ENCODE measurements at regions of chr20 and their contacts with region 1.

Region 1: DNA sequence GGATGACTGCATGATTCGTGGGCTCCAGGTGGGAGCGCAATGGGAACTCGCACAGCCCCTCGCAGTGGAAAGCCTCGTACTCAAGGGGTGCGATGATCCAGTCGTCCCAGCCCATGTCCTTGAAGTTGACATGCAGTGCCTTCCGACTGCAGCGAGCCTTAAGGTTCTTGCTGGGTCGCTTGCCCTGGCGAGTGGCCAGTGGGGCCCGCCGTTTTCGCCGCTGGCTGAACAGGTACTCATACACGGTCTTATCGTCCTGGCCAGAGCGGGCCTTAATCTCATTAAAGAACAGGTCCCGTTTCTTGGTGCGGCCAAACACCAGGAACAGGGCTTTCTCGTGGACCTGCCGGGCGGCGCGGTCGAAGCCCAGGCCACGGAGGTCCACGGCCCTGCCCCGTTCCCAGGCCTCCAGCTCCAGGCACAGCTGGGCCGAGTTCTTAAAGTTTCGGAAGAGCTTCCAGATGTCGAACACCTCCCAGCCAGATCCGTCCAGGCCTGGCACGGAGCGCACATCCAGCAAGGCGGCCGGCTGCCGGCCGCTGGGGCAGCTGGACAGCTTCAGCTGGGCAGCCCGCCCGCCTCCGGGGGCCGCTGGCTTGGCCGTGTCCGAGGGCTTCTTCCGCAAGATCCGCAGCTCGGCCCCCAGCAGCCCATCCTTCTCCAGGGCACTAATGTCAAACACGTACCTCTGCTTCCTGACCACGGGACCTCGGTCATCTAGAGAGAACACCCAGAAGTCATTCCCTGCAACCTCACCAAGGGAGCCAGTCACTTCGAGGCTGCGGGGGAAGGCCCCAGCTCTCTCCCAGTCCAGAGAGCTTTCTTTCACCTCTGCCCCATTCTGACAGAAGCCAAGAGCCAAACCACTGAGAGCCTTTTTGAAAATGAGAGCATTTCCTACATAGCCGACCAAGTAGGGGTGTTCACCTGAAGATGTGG is 3.7 kb downstream of the GDF5 start:
- DNase-seq: no peak
- H3K4me3 ChIP-seq: no peak overlapping the region
- H3K27ac ChIP-seq: no peak overlapping the region
- H3K4me1 ChIP-seq: peaks cover 0 to 21% (median 11%) of the 10 kb centered on the region in 4 donors
- H3K27me3 ChIP-seq: no peaks in the 10 kb centered on the region
- CTCF ChIP-seq: no peak

Region 2: DNA sequence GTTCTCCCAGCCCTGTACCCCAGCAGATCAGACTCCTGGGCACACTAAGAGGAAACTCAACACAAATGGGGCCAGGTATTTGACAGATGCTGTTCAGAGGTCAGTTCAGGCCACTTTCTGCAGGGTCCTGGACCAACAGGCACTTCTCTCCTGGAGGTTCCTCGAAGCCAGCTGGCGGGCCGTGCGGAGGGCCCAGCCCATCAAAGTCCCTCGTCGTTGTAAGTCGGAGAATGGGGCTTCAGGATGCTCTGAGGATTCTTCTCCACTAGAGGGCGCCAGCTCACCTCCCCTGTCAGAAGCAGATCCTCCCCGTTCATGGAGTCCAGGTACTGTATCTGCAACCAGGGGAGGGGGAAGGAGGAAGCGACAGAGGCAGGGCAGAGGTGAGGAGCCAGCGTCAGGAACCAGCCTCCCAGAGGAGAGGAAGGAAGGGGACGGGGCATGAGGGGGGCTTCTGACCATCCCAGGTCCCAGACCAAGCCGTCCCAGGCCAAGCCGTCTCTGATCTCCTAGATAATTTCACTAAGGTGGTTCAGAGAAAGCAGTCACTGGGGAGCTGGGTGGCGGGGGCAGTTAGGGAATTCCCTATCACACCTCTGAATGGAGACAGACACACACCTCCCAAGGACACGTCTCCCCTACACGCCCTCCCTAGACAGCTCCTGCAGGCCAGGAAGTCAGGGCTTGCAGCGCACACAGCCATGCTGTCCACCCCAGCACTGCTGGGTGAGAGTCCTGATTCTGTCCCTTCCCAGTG is 130.4 kb before region 1 on chr20:
- intact Hi-C with region 1: loop called (anchors 5 kb)
- DNase-seq: peak; percentile 76 to 83
- H3K4me3 ChIP-seq: no peak overlapping the region
- H3K27ac ChIP-seq: no peak overlapping the region
- H3K4me1 ChIP-seq: peaks cover 11 to 47% (median 36%) of the 10 kb centered on the region in 4 donors
- H3K27me3 ChIP-seq: no peaks in the 10 kb centered on the region
- CTCF ChIP-seq: peak; percentile 82 to 88

Region 3: DNA sequence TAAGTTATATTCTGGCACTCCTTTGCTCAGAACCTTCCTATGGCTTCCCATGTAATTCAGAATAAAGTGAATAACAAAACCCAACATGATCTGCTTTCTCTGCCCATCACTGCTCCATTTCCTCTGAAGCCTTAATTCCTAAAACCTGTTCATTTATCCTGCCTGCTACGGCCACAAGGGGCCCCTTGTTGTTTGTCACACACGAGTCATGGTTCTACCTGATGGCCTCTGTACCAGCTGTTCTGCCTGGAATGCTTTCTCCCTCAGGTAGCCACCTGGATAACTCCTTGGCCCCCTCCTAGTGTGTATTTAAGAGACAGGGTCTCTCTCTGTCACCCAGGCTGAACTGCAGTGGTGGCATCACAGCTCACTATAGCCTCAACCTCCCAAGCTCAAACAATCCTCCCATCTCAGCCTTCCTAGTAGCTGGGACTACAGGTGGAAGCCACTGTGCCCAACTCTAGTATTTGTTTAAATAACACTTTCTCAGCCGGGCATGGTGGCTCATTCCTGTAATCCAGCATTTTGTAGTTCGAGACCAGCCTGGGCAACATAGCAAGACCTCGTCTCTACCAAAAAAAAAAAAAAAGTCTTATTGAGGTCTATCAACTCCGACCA is 134.4 kb after region 1 on chr20:
- intact Hi-C with region 1: no loop called
- DNase-seq: peak in 1 of 2 donors; percentile 5
- H3K4me3 ChIP-seq: no peak overlapping the region
- H3K27ac ChIP-seq: no peak overlapping the region
- H3K4me1 ChIP-seq: no peaks in the 10 kb centered on the region
- H3K27me3 ChIP-seq: no peaks in the 10 kb centered on the region
- CTCF ChIP-seq: no peak

Region 4: GRCh38 chr20:35673884-35674283 is 239.5 kb after region 1 on chr20:
- intact Hi-C with region 1: no loop called
- DNase-seq: no peak
- H3K4me3 ChIP-seq: no peak overlapping the region
- H3K27ac ChIP-seq: no peak overlapping the region
- H3K4me1 ChIP-seq: no peaks in the 10 kb centered on the region
- H3K27me3 ChIP-seq: no peaks in the 10 kb centered on the region
- CTCF ChIP-seq: no peak

Measured in tibial artery (tissue), 4 donors.